Activated naive CD4-positive, alpha-beta T cell treated with anti-CD3 and anti-CD28 coated beads, Interleukin-2, amount 10 ng/mL, durations not matched to agents 7 days and 5 days (primary cell): ENCODE measurements at regions of chr16 and their contacts with region 1.

Region 1: GRCh38 chr16:27235055-27235937 is 32.0 kb downstream of the KDM8 start:
- DNase-seq: peak; percentile 97
- H3K4me3 Mint-ChIP-seq: peak overlapping the region; percentile 74
- H3K27ac Mint-ChIP-seq: peak overlapping the region; percentile 99
- H3K4me1 Mint-ChIP-seq: peaks cover 99% of the 10 kb centered on the region
- H3K27me3 Mint-ChIP-seq: no peaks in the 10 kb centered on the region

Region 2: DNA sequence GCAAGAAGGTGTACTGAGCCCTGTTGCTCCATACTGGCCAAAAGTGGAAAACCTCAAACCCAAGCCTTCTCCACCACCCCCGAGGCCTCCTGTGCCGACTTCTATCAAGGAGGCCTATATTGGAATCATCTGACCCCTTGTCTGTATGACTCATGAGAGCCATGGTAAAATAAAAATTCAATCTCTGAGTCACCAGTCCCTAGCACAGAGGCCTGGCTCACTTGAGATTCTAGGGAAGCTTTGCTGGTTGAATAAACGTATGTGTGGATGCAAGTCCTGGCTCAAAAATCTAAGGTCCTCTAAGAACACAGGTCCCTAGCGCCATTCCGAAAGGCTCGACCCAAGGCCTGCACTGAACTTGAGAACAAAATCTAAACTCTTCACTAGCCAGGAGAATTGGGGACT is 18.2 kb after region 1 on chr16:
- CTCF ChIA-PET with region 1: interaction called, 11 read pairs
- DNase-seq: no peak
- H3K4me3 Mint-ChIP-seq: no peak overlapping the region
- H3K27ac Mint-ChIP-seq: peak overlapping the region; percentile 82
- H3K4me1 Mint-ChIP-seq: peaks cover 65% of the 10 kb centered on the region
- H3K27me3 Mint-ChIP-seq: no peaks in the 10 kb centered on the region

Region 3: DNA sequence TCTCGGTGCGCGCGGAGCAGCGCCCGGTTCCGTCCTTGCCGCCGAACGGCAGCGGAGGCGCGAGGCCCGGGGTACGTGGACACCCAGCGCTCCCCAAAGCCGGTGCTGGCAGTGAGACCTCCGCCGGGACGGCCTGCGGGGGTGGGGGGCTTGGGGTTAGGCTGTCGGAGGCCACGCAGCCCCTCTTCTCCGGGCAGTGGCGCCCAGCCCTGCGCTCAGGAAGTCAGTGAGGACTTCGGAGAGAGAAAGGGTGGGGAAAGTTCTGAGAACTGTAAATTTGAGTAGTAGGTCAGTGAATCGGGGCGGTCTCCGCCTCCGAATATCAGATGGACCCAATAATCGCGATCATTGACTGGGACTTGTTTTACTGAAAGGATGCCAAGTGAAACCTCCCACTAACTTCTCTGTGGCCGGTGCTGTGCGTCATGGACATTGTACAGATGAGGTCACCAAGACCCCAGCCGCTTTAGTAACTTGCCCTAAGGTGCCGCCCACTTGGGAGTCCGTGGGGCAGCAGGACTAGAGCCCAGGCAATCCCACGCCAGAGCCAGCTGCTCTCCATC is 78.9 kb after region 1 on chr16:
- CTCF ChIA-PET with region 1: interaction called, 159 read pairs
- DNase-seq: peak; percentile 75
- H3K4me3 Mint-ChIP-seq: peak overlapping the region; percentile 94
- H3K27ac Mint-ChIP-seq: peak overlapping the region; percentile 95
- H3K4me1 Mint-ChIP-seq: peaks cover 41% of the 10 kb centered on the region
- H3K27me3 Mint-ChIP-seq: peaks cover 27% of the 10 kb centered on the region

Region 4: GRCh38 chr16:27355610-27356009 is 120.3 kb after region 1 on chr16:
- CTCF ChIA-PET with region 1: interaction called, 29 read pairs
- DNase-seq: peak; percentile 61
- H3K4me3 Mint-ChIP-seq: no peak overlapping the region
- H3K27ac Mint-ChIP-seq: peak overlapping the region; percentile 58
- H3K4me1 Mint-ChIP-seq: peaks cover 13% of the 10 kb centered on the region
- H3K27me3 Mint-ChIP-seq: no peaks in the 10 kb centered on the region